ENCODE measurements at regions of chr6 and their contacts with region 1.

Region 1: DNA sequence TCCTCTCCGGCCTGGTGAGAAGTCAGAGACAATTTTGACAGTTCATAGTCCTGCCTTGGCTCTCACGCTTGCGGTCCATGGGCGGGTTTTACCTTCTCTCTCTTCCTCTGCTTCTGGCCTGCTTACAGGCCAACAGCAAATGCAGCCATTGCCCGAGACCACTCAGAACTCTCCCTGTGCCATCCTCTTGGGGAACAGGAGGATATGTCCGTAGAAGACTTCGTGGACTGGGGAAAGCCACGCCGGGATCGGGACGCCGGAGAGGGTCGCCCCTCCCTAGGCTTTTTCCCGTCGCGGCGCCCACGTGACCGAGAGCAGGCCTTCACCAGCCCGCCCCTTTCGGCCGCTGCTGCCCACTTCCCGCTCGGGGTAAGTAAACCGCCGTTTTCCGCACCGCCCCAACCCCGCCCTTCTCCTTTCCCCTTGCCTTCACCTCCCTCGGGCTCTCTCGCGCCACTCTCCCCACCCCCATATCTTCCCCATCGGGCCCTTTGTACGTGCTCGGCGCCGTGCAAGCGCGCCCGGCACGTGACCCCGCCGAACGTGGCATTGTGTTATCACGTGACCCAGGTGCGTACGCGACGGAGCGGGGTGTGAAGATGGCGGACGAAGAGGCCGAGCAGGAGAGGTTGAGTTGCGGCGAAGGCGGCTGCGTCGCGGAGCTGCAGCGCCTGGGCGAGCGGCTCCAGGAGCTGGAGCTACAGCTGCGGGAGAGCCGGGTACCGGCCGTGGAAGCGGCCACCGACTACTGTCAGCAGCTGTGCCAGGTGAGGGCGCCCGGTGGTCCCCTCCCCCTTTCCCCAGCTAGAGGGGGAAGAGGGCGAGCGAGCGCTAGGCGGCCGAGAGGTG is at the start of gene ZNF292:
- DNase-seq: peak; percentile 94
- ATAC-seq: peak; percentile 85
- H3K4me3 Mint-ChIP-seq: peak within 1 kb of the TSS; percentile 91
- H3K27ac Mint-ChIP-seq: peak within 1 kb of the TSS; percentile 97
- H3K4me1 Mint-ChIP-seq: peaks cover 57% of the 10 kb centered on the region
- H3K27me3 Mint-ChIP-seq: no peaks in the 10 kb centered on the region
- CTCF ChIP-seq: no peak
- total RNA-seq, gene ZNF292: 54.8 and 66.6 TPM in 2 replicates

Region 2: GRCh38 chr6:85593438-85594196 is 1561.6 kb before region 1 on chr6 and contains the start of gene SNX14:
- CTCF ChIA-PET with region 1: no interaction called
- POLR2A ChIA-PET with region 1: no interaction called
- intact Hi-C with region 1: loop called (anchors 1 kb)
- DNase-seq: peak; percentile 82
- ATAC-seq: peak; percentile 87
- H3K4me3 Mint-ChIP-seq: peak within 1 kb of the TSS; percentile 99
- H3K27ac Mint-ChIP-seq: peak within 1 kb of the TSS; percentile 98
- H3K4me1 Mint-ChIP-seq: peaks cover 47% of the 10 kb centered on the region
- H3K27me3 Mint-ChIP-seq: no peaks in the 10 kb centered on the region
- CTCF ChIP-seq: no peak
- total RNA-seq, gene SNX14: 61.6 and 70.8 TPM in 2 replicates

Region 3: DNA sequence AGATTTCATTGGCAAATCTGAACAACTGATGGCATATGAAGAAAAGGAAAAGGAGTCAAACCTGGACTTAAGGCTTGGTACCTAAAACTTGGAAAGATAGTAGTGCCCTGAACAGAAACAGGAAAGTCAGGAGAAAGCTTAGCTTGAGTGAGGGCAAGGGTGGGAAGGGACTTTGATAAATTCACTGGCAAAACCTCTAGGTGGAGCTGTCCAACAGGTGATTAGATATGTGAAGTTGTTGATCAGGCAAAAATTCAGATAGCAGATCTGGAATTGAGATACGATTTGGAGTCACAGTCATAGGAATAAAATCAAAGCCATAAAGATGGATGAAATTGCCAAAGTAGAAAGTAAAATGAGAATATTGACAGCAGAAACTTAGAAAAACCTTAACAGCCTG is 16.0 kb before region 1 on chr6:
- CTCF ChIA-PET with region 1: interaction called, 5 read pairs
- POLR2A ChIA-PET with region 1: interaction called, 4 read pairs
- intact Hi-C with region 1: loop called (anchors 1 kb)
- DNase-seq: no peak
- ATAC-seq: peak; percentile 69
- H3K4me3 Mint-ChIP-seq: no peak overlapping the region
- H3K27ac Mint-ChIP-seq: no peak overlapping the region
- H3K4me1 Mint-ChIP-seq: peaks cover 3% of the 10 kb centered on the region
- H3K27me3 Mint-ChIP-seq: peaks cover 4% of the 10 kb centered on the region
- CTCF ChIP-seq: peak; percentile 66

Region 4: DNA sequence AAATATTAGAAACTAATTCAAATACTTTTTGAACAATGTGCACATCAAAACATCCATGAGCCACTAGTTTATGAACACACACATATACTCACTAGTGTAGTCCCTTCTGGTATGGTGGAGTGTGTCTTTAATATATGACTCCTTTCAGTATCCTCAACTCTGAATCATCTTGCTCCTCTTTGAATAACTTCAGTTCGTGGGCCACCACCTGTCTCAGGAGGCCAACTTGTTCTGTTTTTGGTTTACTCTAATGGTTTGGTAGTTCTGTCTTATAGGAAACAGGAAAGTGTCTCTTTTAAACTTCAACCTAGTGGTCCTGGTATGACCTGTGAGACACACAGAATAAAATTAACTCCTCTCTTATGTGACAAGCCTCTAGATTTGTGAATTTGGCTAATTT is 55.8 kb after region 1 on chr6:
- CTCF ChIA-PET with region 1: no interaction called
- POLR2A ChIA-PET with region 1: interaction called, 5 read pairs
- intact Hi-C with region 1: loop called (anchors 1 kb)
- DNase-seq: no peak
- ATAC-seq: peak; percentile 92
- H3K4me3 Mint-ChIP-seq: no peak overlapping the region
- H3K27ac Mint-ChIP-seq: no peak overlapping the region
- H3K4me1 Mint-ChIP-seq: peaks cover 58% of the 10 kb centered on the region
- H3K27me3 Mint-ChIP-seq: no peaks in the 10 kb centered on the region
- CTCF ChIP-seq: no peak

Region 5: GRCh38 chr6:87277123-87277522 is 121.9 kb after region 1 on chr6:
- CTCF ChIA-PET with region 1: no interaction called
- POLR2A ChIA-PET with region 1: no interaction called
- intact Hi-C with region 1: no loop called
- DNase-seq: no peak
- ATAC-seq: no peak
- H3K4me3 Mint-ChIP-seq: no peak overlapping the region
- H3K27ac Mint-ChIP-seq: no peak overlapping the region
- H3K4me1 Mint-ChIP-seq: peaks cover 4% of the 10 kb centered on the region
- H3K27me3 Mint-ChIP-seq: no peaks in the 10 kb centered on the region
- CTCF ChIP-seq: no peak

Region 6: GRCh38 chr6:87407901-87408720 is 252.9 kb after region 1 on chr6 and contains the start of gene CFAP206:
- CTCF ChIA-PET with region 1: no interaction called
- POLR2A ChIA-PET with region 1: no interaction called
- intact Hi-C with region 1: loop called (anchors 1 kb)
- DNase-seq: peak; percentile 80
- ATAC-seq: peak; percentile 80
- H3K4me3 Mint-ChIP-seq: peak within 1 kb of the TSS; percentile 87
- H3K27ac Mint-ChIP-seq: peak within 1 kb of the TSS; percentile 79
- H3K4me1 Mint-ChIP-seq: peaks cover 9% of the 10 kb centered on the region
- H3K27me3 Mint-ChIP-seq: peaks cover 8% of the 10 kb centered on the region
- CTCF ChIP-seq: no peak
- total RNA-seq, gene CFAP206: 0.09 TPM in 1 of 2 replicates, not detected in the other

Region 7: DNA sequence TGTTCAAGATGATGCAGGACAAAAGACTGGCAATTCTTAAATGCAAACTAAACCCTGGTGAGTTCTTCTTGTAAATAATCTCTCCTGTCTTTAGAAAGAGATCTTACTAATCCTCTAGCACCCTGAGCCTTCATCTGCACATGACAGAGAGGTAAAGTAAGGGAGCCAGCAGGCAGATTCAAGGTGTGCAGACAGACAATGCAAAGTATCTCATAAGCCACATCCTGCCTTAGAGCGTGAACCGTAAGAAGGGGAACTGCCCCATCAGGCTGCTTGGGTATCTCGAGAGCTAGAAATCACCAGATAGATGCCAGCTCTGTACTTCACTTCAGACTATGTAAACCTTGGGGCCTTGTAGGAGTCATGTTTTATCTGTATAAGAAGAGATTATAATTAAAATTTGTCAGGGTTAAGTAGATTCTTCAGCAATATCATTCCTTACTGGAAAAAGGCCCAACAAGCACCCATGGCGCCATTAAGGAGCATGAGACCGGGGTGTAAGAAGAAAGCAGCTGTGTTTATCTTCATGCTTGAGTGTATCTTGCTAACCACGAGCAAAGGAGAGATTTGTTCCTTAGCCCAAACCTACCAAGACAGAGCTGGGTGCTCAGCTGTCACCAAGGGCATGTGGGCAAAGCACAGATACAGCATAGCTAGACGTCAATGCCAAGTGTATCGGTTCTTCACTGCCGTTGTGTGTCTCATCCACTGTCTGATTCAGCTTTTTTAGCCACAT is 986.5 kb after region 1 on chr6:
- CTCF ChIA-PET with region 1: no interaction called
- POLR2A ChIA-PET with region 1: interaction called, 7 read pairs
- intact Hi-C with region 1: loop called (anchors 10 kb)
- DNase-seq: peak; percentile 33
- ATAC-seq: peak; percentile 91
- H3K4me3 Mint-ChIP-seq: peak overlapping the region; percentile 73
- H3K27ac Mint-ChIP-seq: peak overlapping the region; percentile 96
- H3K4me1 Mint-ChIP-seq: peaks cover 65% of the 10 kb centered on the region
- H3K27me3 Mint-ChIP-seq: no peaks in the 10 kb centered on the region
- CTCF ChIP-seq: no peak